ENCODE measurements at regions of chr2 and their contacts with region 1.

Region 1: DNA sequence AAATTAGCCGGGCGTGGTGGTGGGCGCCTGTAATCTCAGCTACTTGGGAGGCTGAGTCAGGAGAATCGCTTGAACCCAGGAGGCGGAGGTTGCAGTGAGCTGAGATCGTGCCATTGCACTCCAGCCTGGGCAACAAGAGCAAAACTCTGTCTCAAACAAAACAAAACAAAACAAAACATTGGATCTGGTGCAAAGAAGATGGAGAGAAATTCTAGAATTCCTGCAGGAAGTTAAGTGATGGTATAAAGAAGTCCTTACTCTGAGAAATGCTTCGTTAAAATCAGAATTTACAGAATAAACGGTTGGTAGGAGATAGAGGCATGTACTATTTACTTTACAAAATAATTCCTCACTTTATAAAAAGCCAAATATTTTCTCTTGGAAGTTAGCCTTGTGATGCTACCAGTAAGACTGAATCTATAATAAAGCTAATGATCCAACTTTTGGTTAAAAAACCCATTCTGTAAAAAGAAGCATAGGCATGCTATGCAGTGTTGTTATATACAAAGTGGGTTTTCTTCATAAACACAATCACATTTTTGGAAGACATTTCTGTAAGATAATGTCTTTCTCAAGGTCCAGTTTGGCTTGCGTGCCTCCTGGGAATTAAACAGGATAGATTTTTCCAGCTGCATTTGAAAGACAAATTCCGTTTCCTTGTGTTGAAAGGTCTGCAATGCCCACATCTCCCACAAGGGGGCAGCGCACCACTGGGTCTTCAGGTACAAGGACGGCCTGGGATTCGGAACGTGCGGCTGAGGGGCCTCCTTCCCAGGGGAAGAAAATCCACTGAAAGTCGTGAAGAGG is 35.6 kb upstream of the PNO1 start:
- DNase-seq: peak; percentile 87
- H3K4me3 Mint-ChIP-seq: no peak overlapping the region
- H3K27ac Mint-ChIP-seq: no peak overlapping the region
- H3K4me1 Mint-ChIP-seq: peaks cover 2% of the 10 kb centered on the region
- H3K27me3 Mint-ChIP-seq: no peaks in the 10 kb centered on the region

Region 2: DNA sequence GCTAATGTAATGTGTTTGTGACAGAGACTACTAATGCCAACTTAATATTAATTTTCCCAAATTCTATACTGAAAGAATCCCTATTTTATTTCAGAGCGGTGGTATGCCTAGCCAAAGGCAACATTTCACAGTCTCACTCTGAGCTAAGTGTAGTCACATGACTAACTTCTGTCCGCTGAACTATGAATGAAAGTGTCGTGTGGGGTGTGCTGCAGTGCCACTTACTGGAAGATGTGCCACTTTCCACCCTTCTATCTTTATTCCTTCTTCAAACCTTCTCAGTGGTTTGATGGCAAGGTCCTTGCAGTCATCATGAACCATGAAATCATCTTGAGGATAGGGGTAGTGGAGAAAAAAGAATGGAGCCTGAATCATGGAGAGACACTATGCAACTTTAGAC is 12.0 kb before region 1 on chr2:
- CTCF ChIA-PET with region 1: interaction called, 12 read pairs
- intact Hi-C with region 1: no loop called
- DNase-seq: no peak
- H3K4me3 Mint-ChIP-seq: no peak overlapping the region
- H3K27ac Mint-ChIP-seq: no peak overlapping the region
- H3K4me1 Mint-ChIP-seq: no peaks in the 10 kb centered on the region
- H3K27me3 Mint-ChIP-seq: no peaks in the 10 kb centered on the region

Region 3: DNA sequence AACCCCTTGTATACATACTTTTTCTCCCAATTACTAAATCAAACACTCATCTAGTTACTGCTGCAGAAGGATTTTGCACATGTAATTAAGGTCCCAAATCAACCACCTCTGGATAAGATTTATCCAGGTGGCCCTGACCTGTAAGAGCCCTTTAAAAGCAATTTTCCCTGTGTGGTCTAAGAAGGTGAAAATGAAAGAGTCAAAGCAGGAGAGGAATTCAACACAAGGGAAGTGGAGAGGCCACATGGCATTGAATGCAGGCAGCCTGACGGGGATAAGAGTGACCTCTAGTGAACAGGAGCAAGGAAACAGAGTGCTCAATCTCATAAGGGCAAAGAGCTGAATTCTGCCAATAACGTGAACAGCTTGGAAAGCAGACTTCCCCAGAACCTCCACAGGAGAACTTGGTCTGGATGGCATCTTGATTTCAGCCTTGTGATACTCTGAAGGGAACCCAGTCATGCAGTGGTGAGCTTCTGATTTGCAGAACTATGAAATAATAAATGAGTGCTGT is 103.1 kb after region 1 on chr2:
- CTCF ChIA-PET with region 1: no interaction called
- intact Hi-C with region 1: loop called (anchors 1 kb)
- DNase-seq: peak; percentile 28
- H3K4me3 Mint-ChIP-seq: no peak overlapping the region
- H3K27ac Mint-ChIP-seq: no peak overlapping the region
- H3K4me1 Mint-ChIP-seq: peaks cover 81% of the 10 kb centered on the region
- H3K27me3 Mint-ChIP-seq: no peaks in the 10 kb centered on the region

Region 4: DNA sequence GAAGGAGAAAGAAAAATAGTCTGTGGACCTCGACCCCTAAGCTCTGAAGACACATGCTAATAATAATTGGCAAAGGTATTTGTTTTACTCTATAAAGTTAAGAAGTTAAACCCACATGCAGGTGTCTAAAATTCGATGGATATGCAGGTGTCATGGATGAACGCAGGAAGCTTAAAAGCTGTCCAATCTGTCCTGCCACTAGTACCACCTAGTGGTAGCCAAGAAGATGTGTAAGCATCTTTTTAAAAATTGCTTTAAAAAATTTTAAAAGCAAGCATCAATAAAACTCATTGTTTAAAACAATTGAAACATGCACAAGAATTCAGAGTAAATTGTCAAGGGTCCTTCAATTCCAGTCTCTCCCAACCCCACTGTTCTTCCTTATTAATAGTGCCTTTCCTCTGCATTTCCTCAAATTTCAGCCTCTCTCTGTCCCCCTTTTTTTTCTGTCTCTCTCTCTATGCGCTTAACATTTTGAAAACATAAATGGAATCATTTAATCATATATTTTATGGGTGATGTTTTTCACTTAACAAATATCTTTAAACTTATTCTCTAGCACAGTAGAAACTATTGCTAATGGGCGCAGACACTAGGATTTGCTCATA is 160.8 kb after region 1 on chr2:
- CTCF ChIA-PET with region 1: interaction called, 60 read pairs
- intact Hi-C with region 1: loop called (anchors 1 kb)
- DNase-seq: peak; percentile 18
- H3K4me3 Mint-ChIP-seq: no peak overlapping the region
- H3K27ac Mint-ChIP-seq: no peak overlapping the region
- H3K4me1 Mint-ChIP-seq: no peaks in the 10 kb centered on the region
- H3K27me3 Mint-ChIP-seq: peaks cover 2% of the 10 kb centered on the region

Region 5: GRCh38 chr2:68362069-68362468 is 240.0 kb after region 1 on chr2:
- CTCF ChIA-PET with region 1: no interaction called
- intact Hi-C with region 1: loop called (anchors 1 kb)
- DNase-seq: peak; percentile 88
- H3K4me3 Mint-ChIP-seq: peak overlapping the region; percentile 17
- H3K27ac Mint-ChIP-seq: no peak overlapping the region
- H3K4me1 Mint-ChIP-seq: peaks cover 9% of the 10 kb centered on the region
- H3K27me3 Mint-ChIP-seq: peaks cover 3% of the 10 kb centered on the region